MCF 10A (cell line): ENCODE measurements at regions of chr14 and their contacts with region 1.

Region 1: GRCh38 chr14:77314043-77314442 is 6.6 kb downstream of the POMT2 start:
- DNase-seq: peak; percentile 78
- H3K4me3 Mint-ChIP-seq: no peak overlapping the region
- H3K27ac Mint-ChIP-seq: peak overlapping the region; percentile 96
- H3K4me1 Mint-ChIP-seq: peaks cover 57% of the 10 kb centered on the region
- H3K27me3 Mint-ChIP-seq: no peaks in the 10 kb centered on the region
- CTCF ChIP-seq: no peak

Region 2: GRCh38 chr14:77158175-77158891 is 155.7 kb before region 1 on chr14:
- CTCF ChIA-PET with region 1: interaction called, 153 read pairs
- POLR2A ChIA-PET with region 1: interaction called, 8 read pairs
- intact Hi-C with region 1: no loop called
- DNase-seq: peak; percentile 48
- H3K4me3 Mint-ChIP-seq: no peak overlapping the region
- H3K27ac Mint-ChIP-seq: peak overlapping the region; percentile 37
- H3K4me1 Mint-ChIP-seq: peaks cover 13% of the 10 kb centered on the region
- H3K27me3 Mint-ChIP-seq: no peaks in the 10 kb centered on the region
- CTCF ChIP-seq: no peak

Region 3: GRCh38 chr14:77268989-77269600 is 44.9 kb before region 1 on chr14:
- CTCF ChIA-PET with region 1: interaction called, 14 read pairs
- POLR2A ChIA-PET with region 1: interaction called, 3 read pairs
- intact Hi-C with region 1: no loop called
- DNase-seq: peak; percentile 36
- H3K4me3 Mint-ChIP-seq: no peak overlapping the region
- H3K27ac Mint-ChIP-seq: no peak overlapping the region
- H3K4me1 Mint-ChIP-seq: peaks cover 12% of the 10 kb centered on the region
- H3K27me3 Mint-ChIP-seq: peaks cover 11% of the 10 kb centered on the region
- CTCF ChIP-seq: no peak

Region 4: DNA sequence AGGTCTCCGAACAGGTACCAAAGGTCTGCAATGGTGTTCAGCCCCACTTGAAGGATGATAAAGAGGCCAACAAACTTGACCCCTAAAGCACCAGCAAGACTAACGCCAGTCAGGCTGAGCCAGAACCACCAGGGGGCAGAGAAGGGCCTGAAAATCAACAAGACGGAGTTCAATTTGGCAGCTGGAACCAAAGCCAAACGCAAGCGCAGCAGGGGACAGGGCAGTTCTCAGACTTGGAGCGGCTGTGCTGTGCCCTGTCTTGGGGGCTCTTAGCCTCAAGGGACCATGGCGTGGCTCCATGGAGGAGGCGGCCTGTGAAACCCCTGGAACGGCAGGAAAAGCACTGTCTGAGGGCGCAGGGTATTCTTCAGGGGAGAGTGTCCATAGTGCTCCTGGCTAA is 12.9 kb before region 1 on chr14:
- CTCF ChIA-PET with region 1: interaction called, 264 read pairs
- POLR2A ChIA-PET with region 1: interaction called, 108 read pairs
- intact Hi-C with region 1: loop called (anchors 1 kb)
- DNase-seq: peak; percentile 75
- H3K4me3 Mint-ChIP-seq: no peak overlapping the region
- H3K27ac Mint-ChIP-seq: no peak overlapping the region
- H3K4me1 Mint-ChIP-seq: peaks cover 24% of the 10 kb centered on the region
- H3K27me3 Mint-ChIP-seq: no peaks in the 10 kb centered on the region
- CTCF ChIP-seq: peak; percentile 83

Region 5: DNA sequence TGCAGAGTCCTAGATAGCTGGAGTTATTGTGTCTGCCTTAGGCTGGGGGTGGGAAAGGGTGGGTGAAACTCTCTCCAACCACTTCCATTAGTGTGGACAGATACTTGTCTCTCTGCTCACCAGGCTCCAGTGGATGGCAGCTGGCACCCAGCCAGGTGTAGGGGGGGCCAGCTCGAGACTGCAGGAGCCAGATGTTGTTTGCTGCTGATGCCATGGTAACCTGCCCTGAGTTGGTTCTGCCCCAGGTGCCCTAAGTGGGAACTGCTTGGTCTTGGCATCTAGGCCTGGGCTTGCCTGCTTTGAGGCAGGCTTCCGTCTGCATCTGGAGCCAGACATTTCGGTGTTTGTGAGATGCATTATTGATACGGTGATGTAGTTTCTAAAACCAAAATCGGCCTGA is 568.1 kb after region 1 on chr14:
- CTCF ChIA-PET with region 1: no interaction called
- POLR2A ChIA-PET with region 1: no interaction called
- intact Hi-C with region 1: no loop called
- DNase-seq: no peak
- H3K4me3 Mint-ChIP-seq: no peak overlapping the region
- H3K27ac Mint-ChIP-seq: no peak overlapping the region
- H3K4me1 Mint-ChIP-seq: peaks cover 6% of the 10 kb centered on the region
- H3K27me3 Mint-ChIP-seq: no peaks in the 10 kb centered on the region
- CTCF ChIP-seq: no peak